ENCODE measurements at regions of chr1 and their contacts with region 1.

Region 1: GRCh38 chr1:205273551-205273982 is 45.8 kb downstream of the TMCC2 start:
- DNase-seq: peak; percentile 74 to 92 (median 84)
- ATAC-seq: peak; percentile 77
- H3K4me3 Mint-ChIP-seq: peak overlapping the region; percentile 50 to 87 (median 69)
- H3K27ac Mint-ChIP-seq: peak overlapping the region; percentile 55 to 97 (median 88)
- H3K4me1 Mint-ChIP-seq: peaks cover 11 to 50% (median 45%) of the 10 kb centered on the region in 4 donors
- H3K27me3 Mint-ChIP-seq: no peaks in the 10 kb centered on the region

Region 2: DNA sequence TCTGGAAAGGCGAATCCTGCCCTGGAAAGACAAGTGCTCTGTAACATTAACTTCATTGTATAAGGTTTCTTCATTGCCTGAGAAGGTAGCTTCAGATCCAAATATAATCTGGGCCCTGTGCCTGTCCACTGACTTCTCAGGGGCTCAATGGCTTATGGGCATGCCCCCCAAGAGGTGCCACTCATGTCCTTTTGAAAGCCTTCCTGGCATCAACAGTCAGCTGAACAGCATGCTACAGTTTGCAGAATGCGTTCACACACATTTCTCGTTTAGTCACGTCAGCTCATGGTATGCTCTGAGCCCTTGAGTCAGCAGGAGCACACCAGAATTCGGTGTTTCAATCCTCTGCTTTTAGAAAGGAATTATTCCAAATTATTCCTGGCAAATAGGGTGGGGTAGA is 22.0 kb before region 1 on chr1:
- POLR2A ChIA-PET with region 1: no interaction called
- DNase-seq: no peak
- ATAC-seq: no peak
- H3K4me3 Mint-ChIP-seq: no peak overlapping the region
- H3K27ac Mint-ChIP-seq: no peak overlapping the region
- H3K4me1 Mint-ChIP-seq: peaks cover 0 to 9% (median 5%) of the 10 kb centered on the region in 4 donors
- H3K27me3 Mint-ChIP-seq: peaks cover 0 to 1% (median 0%) of the 10 kb centered on the region in 5 donors

Region 3: GRCh38 chr1:205294175-205294913 is 20.8 kb after region 1 on chr1:
- POLR2A ChIA-PET with region 1: interaction called, 383 read pairs
- DNase-seq: no peak
- ATAC-seq: no peak
- H3K4me3 Mint-ChIP-seq: peak overlapping the region in 3 of 10 donors; percentile 4 to 58 (median 15)
- H3K27ac Mint-ChIP-seq: peak overlapping the region in 8 of 10 donors; percentile 54 to 92 (median 68)
- H3K4me1 Mint-ChIP-seq: peaks cover 35 to 87% (median 86%) of the 10 kb centered on the region in 4 donors
- H3K27me3 Mint-ChIP-seq: no peaks in the 10 kb centered on the region

Region 4: GRCh38 chr1:205300886-205301821 is 27.6 kb after region 1 on chr1:
- POLR2A ChIA-PET with region 1: interaction called, 29 read pairs
- DNase-seq: no peak
- ATAC-seq: no peak
- H3K4me3 Mint-ChIP-seq: peak overlapping the region in 1 of 10 donors; percentile 59
- H3K27ac Mint-ChIP-seq: peak overlapping the region in 9 of 10 donors; percentile 31 to 87 (median 68)
- H3K4me1 Mint-ChIP-seq: peaks cover 25 to 77% (median 71%) of the 10 kb centered on the region in 4 donors
- H3K27me3 Mint-ChIP-seq: no peaks in the 10 kb centered on the region

Region 5: DNA sequence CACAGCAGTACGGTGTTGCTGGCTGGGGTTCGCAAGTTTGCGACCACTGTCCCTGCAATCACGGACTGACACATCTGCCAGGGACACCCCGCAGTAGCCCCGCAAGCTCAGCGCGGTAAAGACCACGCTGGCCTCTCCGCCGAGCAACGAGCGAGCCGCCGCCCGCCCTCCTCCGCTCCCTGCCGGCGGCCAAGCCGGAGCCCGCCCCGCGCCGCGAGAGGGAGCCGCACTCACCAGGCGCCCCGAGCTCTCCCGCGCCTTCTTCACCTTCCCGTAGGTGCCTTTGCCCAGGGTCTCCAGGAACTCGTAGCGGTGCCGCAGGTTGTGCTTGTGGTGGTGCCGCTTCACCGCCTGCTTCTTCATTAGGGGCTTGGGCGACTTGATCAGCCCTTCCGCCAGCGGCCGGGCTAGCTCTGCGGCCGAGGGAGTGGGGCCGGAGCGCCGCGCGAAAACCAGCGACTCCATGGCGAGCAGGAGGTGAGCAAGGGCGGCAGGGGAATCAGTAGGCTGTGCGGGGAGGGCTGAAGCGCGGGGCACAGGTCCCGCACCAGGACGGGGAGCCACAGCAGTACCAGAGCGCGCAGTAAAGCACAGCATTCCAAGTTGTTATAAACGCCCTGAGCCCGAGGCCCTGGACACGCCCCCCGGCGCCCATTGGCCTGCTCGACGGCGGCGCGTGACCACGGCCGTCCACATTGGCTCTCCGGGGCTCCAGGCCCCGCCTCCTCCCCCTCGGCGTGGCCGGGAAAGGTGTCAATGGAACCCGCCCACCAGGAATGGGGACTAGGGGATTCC is 47.8 kb after region 1 on chr1 and contains the start of gene NUAK2:
- POLR2A ChIA-PET with region 1: interaction called, 590 read pairs
- DNase-seq: peak; percentile 80 to 91 (median 84)
- ATAC-seq: peak; percentile 87 to 93
- H3K4me3 Mint-ChIP-seq: peak within 1 kb of the TSS; percentile 92 to 100 (median 98)
- H3K27ac Mint-ChIP-seq: peak within 1 kb of the TSS; percentile 83 to 99 (median 96)
- H3K4me1 Mint-ChIP-seq: peaks cover 46 to 83% (median 70%) of the 10 kb centered on the region in 4 donors
- H3K27me3 Mint-ChIP-seq: peaks cover 0 to 2% (median 0%) of the 10 kb centered on the region in 5 donors
- polyA plus RNA-seq, gene NUAK2: 14.3 to 73.6 (median 34.0) TPM

Region 6: GRCh38 chr1:205335643-205336091 is 62.1 kb after region 1 on chr1:
- POLR2A ChIA-PET with region 1: interaction called, 590 read pairs
- DNase-seq: peak; percentile 58 to 85 (median 71)
- ATAC-seq: peak; percentile 91 to 99
- H3K4me3 Mint-ChIP-seq: no peak overlapping the region
- H3K27ac Mint-ChIP-seq: peak overlapping the region in 1 of 10 donors; percentile 25
- H3K4me1 Mint-ChIP-seq: peaks cover 0 to 5% (median 2%) of the 10 kb centered on the region in 4 donors
- H3K27me3 Mint-ChIP-seq: peaks cover 0 to 2% (median 0%) of the 10 kb centered on the region in 5 donors

Region 7: DNA sequence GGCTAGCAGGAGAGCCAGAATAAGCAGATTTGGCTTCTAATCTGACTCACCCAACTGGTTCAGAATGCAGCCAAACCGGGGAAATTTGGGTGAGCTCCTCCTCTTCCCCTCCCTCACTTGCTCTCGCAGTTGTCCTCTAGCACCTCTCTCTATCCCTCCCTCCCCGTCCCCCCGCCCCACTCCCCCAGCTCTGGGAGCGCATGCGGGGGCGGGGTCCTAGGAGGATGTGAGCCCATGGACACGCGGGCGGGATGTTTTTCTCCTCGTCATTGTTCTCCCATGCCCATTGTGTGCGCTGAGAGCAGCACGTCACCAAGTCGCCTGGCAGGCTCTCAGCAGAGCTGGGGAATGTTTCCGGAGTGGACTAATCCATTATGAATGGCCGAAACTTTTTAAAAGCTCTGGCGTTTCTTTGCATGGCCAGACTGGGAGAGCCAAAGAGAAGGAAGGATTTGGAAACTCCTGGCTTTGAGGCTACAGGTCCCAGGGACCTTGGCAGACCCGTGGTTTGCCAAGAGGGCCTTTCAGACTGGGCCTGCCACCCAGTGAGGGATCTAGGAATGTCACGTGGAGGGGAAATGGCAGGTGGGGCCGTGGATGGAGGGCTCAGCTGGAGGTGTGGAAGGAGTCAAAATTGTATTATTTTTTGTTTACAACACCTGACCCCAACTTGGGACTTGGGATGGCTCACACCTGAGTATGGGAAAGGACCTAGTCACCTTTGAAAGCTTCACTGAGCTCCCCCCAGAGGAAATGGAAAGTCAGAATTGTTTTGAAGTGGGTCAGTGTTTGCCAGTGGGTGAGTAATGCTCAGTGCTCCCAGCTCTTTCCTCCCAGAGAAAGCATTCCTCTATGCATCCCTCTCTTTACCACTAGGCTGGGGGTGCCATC is 270.1 kb after region 1 on chr1:
- POLR2A ChIA-PET with region 1: no interaction called
- DNase-seq: no peak
- ATAC-seq: peak in 1 of 2 donors; percentile 38
- H3K4me3 Mint-ChIP-seq: peak overlapping the region in 3 of 10 donors; percentile 28 to 48 (median 28)
- H3K27ac Mint-ChIP-seq: peak overlapping the region in 1 of 10 donors; percentile 34
- H3K4me1 Mint-ChIP-seq: peaks cover 5 to 8% (median 6%) of the 10 kb centered on the region in 4 donors
- H3K27me3 Mint-ChIP-seq: peaks cover 15 to 72% (median 35%) of the 10 kb centered on the region in 5 donors

Region 8: GRCh38 chr1:205794011-205794730 is 520.6 kb after region 1 on chr1:
- POLR2A ChIA-PET with region 1: no interaction called
- DNase-seq: no peak
- ATAC-seq: no peak
- H3K4me3 Mint-ChIP-seq: no peak overlapping the region
- H3K27ac Mint-ChIP-seq: peak overlapping the region in 4 of 10 donors; percentile 21 to 69 (median 58)
- H3K4me1 Mint-ChIP-seq: peaks cover 0 to 4% (median 1%) of the 10 kb centered on the region in 4 donors
- H3K27me3 Mint-ChIP-seq: no peaks in the 10 kb centered on the region

Measured in naive thymus-derived CD8-positive, alpha-beta T cell (primary cell).